Ovary (tissue), 10 donors: ENCODE measurements at regions of chr11 and their contacts with region 1.

Region 1: GRCh38 chr11:126310228-126310991 is 6.5 kb downstream of the DCPS start:
- DNase-seq: peak; percentile 78 to 87 (median 87)
- H3K4me3 ChIP-seq: no peak overlapping the region
- H3K27ac ChIP-seq: no peak overlapping the region
- H3K4me1 ChIP-seq: peaks cover 2% of the 10 kb centered on the region
- H3K27me3 ChIP-seq: no peaks in the 10 kb centered on the region
- CTCF ChIP-seq: peak; percentile 83 to 94 (median 92)
- EP300 ChIP-seq: no peak
- POLR2A ChIP-seq: no peak

Region 2: DNA sequence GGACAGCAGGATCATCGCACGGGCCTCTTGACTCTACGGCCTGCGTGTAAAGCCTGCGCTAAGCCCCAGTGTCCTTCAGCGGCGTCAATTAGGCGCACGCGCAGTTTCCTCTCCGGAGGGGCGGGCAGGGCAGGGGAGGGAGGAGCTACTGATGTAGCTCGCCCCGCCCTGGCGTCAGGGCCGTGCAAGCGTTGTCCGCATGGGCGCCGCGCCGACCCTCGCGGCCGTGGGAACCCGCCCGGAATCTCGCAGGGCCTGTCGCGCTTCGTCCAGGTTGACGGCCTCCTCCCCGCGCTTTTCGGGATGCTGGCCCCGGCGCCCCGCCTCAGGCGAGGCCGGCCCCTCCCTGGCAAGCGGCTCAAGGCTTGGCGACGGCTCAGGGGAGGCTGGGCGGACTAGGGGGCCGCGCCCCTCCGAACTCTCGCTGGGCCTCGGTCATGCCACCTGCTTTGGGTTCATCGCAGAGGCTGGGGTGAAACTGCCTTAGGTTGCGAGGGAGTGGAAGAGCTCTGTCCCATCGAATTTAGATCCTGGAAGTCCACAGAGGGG is 106.2 kb after region 1 on chr11:
- intact Hi-C with region 1: loop called in 1 of 4 experiments (anchors 10 kb)
- DNase-seq: peak; percentile 92 to 96 (median 95)
- H3K4me3 ChIP-seq: peak overlapping the region; percentile 45
- H3K27ac ChIP-seq: peak overlapping the region; percentile 79 to 93
- H3K4me1 ChIP-seq: peaks cover 42% of the 10 kb centered on the region
- H3K27me3 ChIP-seq: no peaks in the 10 kb centered on the region
- CTCF ChIP-seq: no peak
- EP300 ChIP-seq: no peak
- POLR2A ChIP-seq: peak; percentile 40

Region 3: GRCh38 chr11:126431401-126432064 is 121.1 kb after region 1 on chr11:
- intact Hi-C with region 1: loop called in 3 of 4 experiments (anchors 10 kb)
- DNase-seq: peak; percentile 66 to 82 (median 72)
- H3K4me3 ChIP-seq: no peak overlapping the region
- H3K27ac ChIP-seq: peak overlapping the region; percentile 50 to 70
- H3K4me1 ChIP-seq: peaks cover 36% of the 10 kb centered on the region
- H3K27me3 ChIP-seq: no peaks in the 10 kb centered on the region
- CTCF ChIP-seq: no peak
- EP300 ChIP-seq: no peak
- POLR2A ChIP-seq: no peak